Astrocyte of the cerebellum (primary cell): ENCODE measurements at regions of chr9 and their contacts with region 1.

Region 1: GRCh38 chr9:4499917-4500316 is 9.6 kb downstream of the SLC1A1 start:
- DNase-seq: no peak
- H3K4me3 ChIP-seq: no peak overlapping the region
- CTCF ChIP-seq: no peak

Region 2: GRCh38 chr9:4327504-4328191 is 172.3 kb before region 1 on chr9:
- in situ Hi-C with region 1: no loop called
- DNase-seq: peak; percentile 42
- H3K4me3 ChIP-seq: no peak overlapping the region
- CTCF ChIP-seq: peak; percentile 28

Region 3: DNA sequence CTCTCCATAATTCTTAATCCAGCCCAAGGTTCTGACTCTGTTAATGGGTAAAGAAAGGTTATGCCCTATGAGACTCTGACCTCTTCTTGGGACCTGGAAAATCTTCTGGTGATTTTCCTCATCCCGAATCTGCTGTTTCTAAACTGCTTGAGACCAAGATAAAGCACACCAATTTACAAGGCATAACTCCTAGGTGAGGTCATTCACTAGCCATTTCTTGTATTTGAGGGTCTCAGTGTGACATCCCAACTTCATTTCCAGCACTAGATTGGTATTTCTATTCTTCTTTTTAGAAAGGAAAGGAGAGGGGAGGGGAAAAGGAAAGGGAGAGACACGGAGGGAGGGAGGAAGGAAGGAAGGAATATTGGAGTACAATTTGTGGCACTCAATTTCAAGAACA is 41.9 kb after region 1 on chr9:
- in situ Hi-C with region 1: loop called (anchors 5 kb)
- DNase-seq: no peak
- H3K4me3 ChIP-seq: no peak overlapping the region
- CTCF ChIP-seq: no peak

Region 4: DNA sequence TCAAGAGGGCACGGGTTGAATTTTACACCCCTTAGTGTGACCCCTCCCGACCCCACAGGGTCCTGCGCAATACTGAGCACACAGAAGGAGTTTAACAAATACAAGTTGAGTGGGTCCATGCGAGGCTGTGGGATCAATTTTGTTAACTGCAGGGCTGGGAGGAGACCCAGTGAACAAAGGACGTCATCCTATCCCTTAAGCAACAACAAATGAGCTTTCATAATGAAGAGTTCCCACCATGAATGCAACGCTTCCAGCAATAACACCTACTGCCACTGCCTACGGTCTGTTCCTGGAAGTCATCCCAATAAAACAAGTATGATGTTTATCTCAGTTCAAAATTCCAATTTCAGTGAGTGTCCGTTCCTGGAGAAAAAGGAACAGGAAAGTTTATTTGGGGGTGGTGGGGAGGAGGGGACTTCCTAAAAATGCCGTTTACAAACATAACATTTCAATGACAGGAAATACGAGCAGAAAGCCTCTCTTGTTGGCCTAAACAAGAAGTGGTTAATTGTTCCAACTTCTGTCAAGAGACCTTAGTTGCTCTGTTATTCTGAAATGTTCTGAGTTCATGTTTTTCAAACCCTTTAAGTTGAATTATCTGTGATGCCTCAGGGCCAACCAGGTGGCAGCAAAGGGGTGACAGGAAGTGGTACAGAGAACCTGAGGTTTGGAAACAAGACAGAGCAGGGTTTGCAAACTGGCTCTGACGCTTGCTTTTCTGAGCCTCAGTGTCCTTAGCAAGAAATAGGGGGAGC is 96.4 kb after region 1 on chr9:
- in situ Hi-C with region 1: no loop called
- DNase-seq: no peak
- H3K4me3 ChIP-seq: no peak overlapping the region
- CTCF ChIP-seq: no peak